GM12878 (cell line): ENCODE measurements at regions of chr10 and their contacts with region 1.

Region 1: DNA sequence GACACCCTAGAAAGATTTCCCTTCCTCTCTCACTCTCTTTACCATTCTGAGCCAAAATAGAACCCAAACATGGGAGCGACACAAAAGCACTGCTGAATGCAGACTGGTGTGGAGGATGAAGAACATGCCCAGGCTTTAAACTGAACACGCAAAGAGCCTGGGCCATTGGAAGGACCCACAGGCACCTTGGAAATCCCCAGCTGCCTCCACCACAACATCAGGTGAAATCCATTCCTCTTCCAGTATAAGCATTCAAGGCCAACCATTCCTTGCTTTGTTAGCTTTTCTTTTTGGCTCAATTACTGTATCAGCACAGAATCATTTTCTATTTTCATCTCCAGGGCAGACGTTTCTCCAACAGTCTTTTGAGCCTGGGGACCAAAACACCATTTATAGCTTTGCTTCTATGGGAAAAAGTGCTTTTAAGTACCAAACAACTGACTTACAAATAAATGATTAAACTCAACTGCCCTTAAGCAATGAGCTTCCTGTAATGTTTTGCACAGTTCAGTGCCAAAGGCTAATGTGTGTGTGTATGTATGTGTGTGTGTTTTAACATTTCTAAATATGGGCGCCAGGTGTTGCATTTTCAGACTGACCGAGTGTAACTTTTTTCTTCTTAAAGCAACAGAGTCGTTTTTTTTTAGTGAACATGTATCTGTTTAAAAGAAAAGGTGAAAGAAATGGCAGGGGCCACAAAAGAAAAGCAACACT is 16.2 kb upstream of the BLNK start:
- DNase-seq: peak; percentile 93
- ATAC-seq: peak; percentile 81
- H3K4me3 ChIP-seq: peak overlapping the region; percentile 70
- H3K27ac ChIP-seq: peak overlapping the region; percentile 92
- H3K4me1 ChIP-seq: peaks cover 50% of the 10 kb centered on the region
- H3K27me3 ChIP-seq: no peaks in the 10 kb centered on the region
- CTCF ChIP-seq: no peak
- EP300 ChIP-seq: peak; percentile 78 to 96; a peak in 3 of 4 replicates
- POLR2A ChIP-seq: no peak; the same call in 1 of the 2 replicates
- RAD21 ChIP-seq: 0 out of 2 replicates have a peak, but pooled peaks have one; percentile 29

Region 2: DNA sequence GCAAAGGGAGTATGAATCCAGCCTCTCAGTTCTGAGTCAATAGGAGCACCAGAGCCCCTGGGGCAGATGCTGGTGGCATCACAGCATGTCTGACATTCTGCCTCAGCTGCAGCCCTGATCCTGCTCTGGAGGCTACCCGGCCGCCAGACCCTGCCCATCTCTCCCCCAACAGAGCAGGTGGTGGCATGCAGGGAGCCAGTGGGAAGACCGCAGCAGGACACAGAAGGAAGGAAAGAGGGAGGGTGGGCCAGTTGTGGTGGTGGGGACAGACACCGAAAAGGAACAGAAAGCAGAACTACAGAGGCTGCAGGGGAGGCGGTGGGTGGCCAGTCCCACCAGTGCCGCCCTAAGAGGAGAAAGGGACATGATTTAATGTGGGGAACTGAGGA is 51.5 kb before region 1 on chr10:
- CTCF ChIA-PET with region 1: interaction called, 790 read pairs
- POLR2A ChIA-PET with region 1: interaction called, 60 read pairs
- RAD21 ChIA-PET with region 1: interaction called, 428 read pairs
- SMC1A ChIA-PET with region 1: interaction called, 424 read pairs
- in situ Hi-C with region 1: no loop called
- intact Hi-C with region 1: no loop called
- DNase-seq: no peak
- ATAC-seq: peak; percentile 66
- H3K4me3 ChIP-seq: no peak overlapping the region; the same call in 1 of the 2 replicates
- H3K27ac ChIP-seq: peak overlapping the region; percentile 45; the same call in 1 of the 2 replicates
- H3K4me1 ChIP-seq: peaks cover 37% of the 10 kb centered on the region
- H3K27me3 ChIP-seq: no peaks in the 10 kb centered on the region
- CTCF ChIP-seq: no peak
- EP300 ChIP-seq: no peak
- POLR2A ChIP-seq: no peak
- RAD21 ChIP-seq: no peak

Region 3: GRCh38 chr10:96244354-96244753 is 43.2 kb before region 1 on chr10:
- CTCF ChIA-PET with region 1: interaction called, 790 read pairs
- POLR2A ChIA-PET with region 1: interaction called, 22 read pairs
- RAD21 ChIA-PET with region 1: interaction called, 428 read pairs
- SMC1A ChIA-PET with region 1: interaction called, 60 read pairs
- in situ Hi-C with region 1: no loop called
- intact Hi-C with region 1: loop called (anchors 1 kb)
- DNase-seq: peak; percentile 89
- ATAC-seq: peak; percentile 98
- H3K4me3 ChIP-seq: 0 out of 2 replicates have a peak overlapping the region, but pooled peaks have one; percentile 18
- H3K27ac ChIP-seq: peak overlapping the region; percentile 67
- H3K4me1 ChIP-seq: peaks cover 24% of the 10 kb centered on the region
- H3K27me3 ChIP-seq: no peaks in the 10 kb centered on the region
- CTCF ChIP-seq: no peak
- EP300 ChIP-seq: peak; percentile 41 to 56; a peak in 3 of 4 replicates
- POLR2A ChIP-seq: peak; percentile 46
- RAD21 ChIP-seq: peak; percentile 3; the same call in 1 of the 2 replicates

Region 4: DNA sequence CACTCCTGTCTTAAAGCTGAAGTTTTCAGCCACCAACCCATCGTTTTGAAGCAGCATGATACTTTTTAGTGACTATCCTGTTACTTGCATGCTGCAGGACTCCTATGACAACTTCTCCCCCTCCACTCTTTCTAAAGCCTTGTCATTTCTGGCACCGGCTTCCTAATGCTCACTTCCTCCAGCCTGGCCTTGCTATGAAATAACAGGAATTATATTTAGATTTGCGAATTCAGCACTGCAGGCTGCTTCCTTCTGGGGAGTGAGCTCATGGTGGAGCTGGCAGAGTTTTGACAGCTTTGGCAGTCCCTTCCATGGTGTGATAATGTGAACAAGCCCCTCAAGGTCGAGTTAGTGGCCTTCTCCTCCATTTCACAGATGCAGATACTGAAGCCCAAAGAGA is 29.6 kb before region 1 on chr10:
- CTCF ChIA-PET with region 1: interaction called, 26 read pairs
- POLR2A ChIA-PET with region 1: interaction called, 12 read pairs
- RAD21 ChIA-PET with region 1: interaction called, 362 read pairs
- SMC1A ChIA-PET with region 1: interaction called, 140 read pairs
- in situ Hi-C with region 1: no loop called
- intact Hi-C with region 1: no loop called
- DNase-seq: no peak
- ATAC-seq: peak; percentile 19; the same call in 2 of the 3 replicates
- H3K4me3 ChIP-seq: peak overlapping the region; percentile 1; the same call in 1 of the 2 replicates
- H3K27ac ChIP-seq: peak overlapping the region; percentile 38
- H3K4me1 ChIP-seq: peaks cover 34% of the 10 kb centered on the region
- H3K27me3 ChIP-seq: no peaks in the 10 kb centered on the region
- CTCF ChIP-seq: no peak
- EP300 ChIP-seq: no peak
- POLR2A ChIP-seq: no peak
- RAD21 ChIP-seq: no peak

Region 5: GRCh38 chr10:96357038-96357620 is 69.6 kb after region 1 on chr10:
- CTCF ChIA-PET with region 1: no interaction called
- POLR2A ChIA-PET with region 1: no interaction called
- RAD21 ChIA-PET with region 1: no interaction called
- SMC1A ChIA-PET with region 1: no interaction called
- in situ Hi-C with region 1: no loop called
- intact Hi-C with region 1: no loop called
- DNase-seq: no peak
- ATAC-seq: no peak
- H3K4me3 ChIP-seq: no peak overlapping the region
- H3K27ac ChIP-seq: no peak overlapping the region
- H3K4me1 ChIP-seq: no peaks in the 10 kb centered on the region
- H3K27me3 ChIP-seq: peaks cover 2 to 5% of the 10 kb centered on the region in 2 experiments; a peak in 3 of 4 replicates
- CTCF ChIP-seq: no peak
- EP300 ChIP-seq: no peak
- POLR2A ChIP-seq: no peak
- RAD21 ChIP-seq: no peak

Region 6: DNA sequence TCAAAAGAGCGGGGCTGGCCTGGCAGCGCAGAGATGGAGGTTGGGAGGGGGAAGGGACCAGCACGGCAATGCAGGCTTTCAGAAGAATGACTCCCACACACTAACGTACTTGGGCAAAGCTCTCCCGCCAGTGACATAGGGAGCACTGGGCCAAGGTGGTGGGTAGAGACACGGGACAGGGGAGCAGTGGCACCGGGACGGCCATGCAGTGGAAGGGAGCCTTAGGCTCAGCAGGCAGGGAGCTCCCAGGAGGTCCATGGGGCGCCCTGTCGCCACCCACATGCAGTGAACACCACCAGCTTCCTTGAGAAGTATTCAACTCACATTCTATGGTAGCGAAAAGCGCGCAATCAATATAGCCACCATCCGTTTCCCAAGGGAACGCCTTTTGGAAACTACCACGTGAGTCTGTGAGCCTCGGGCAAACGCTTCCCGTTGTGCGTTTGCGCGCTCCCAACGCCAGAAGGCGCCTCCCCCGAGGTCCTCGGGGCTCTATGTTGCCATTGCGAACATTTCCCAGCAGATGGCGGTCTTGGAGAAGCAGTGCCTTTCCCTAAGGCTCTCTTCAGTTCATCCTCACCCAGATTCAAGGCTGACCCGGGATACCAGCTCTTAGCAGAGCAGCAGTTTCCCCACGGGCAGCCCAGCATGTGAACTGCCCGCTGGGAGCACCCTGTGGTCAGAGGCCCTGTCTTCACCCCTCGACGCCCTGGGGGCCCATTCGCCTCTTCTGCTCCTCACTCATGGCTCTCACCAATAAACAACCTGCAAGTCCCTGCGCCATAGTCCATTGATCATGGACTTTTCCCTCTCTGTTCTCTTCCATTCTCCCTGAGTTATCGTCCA is 87.7 kb after region 1 on chr10:
- CTCF ChIA-PET with region 1: no interaction called
- POLR2A ChIA-PET with region 1: no interaction called
- RAD21 ChIA-PET with region 1: no interaction called
- SMC1A ChIA-PET with region 1: no interaction called
- in situ Hi-C with region 1: no loop called
- intact Hi-C with region 1: no loop called
- DNase-seq: peak; percentile 45
- ATAC-seq: peak; percentile 91
- H3K4me3 ChIP-seq: peak overlapping the region; percentile 68; the same call in 1 of the 2 replicates
- H3K27ac ChIP-seq: no peak overlapping the region
- H3K4me1 ChIP-seq: peaks cover 8% of the 10 kb centered on the region
- H3K27me3 ChIP-seq: no peaks in the 10 kb centered on the region; a peak in 1 of 4 replicates
- CTCF ChIP-seq: peak; percentile 98 to 100 (median 99)
- EP300 ChIP-seq: no peak
- POLR2A ChIP-seq: no peak
- RAD21 ChIP-seq: peak; percentile 87

Region 7: DNA sequence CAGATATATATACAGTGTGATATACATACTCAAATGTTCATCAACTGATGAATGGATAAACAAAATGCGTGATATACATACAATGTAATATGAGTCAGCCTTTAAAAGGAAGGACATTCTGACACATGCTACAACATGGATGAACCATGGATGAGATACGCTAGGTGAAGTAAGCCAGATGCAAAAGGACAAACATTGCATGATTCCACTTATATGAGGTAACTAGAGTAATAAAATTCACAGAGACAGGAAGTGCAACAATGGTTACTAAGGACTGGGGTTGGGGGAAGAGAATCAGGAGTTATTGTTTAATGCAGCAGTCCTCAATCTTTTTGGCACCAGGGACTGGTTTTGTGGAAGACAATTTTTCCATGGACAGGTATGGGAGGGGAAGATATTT is 480.1 kb after region 1 on chr10:
- CTCF ChIA-PET with region 1: no interaction called
- POLR2A ChIA-PET with region 1: no interaction called
- RAD21 ChIA-PET with region 1: no interaction called
- SMC1A ChIA-PET with region 1: no interaction called
- in situ Hi-C with region 1: no loop called
- intact Hi-C with region 1: no loop called
- DNase-seq: no peak
- ATAC-seq: no peak
- H3K4me3 ChIP-seq: no peak overlapping the region
- H3K27ac ChIP-seq: no peak overlapping the region
- H3K4me1 ChIP-seq: peaks cover 15% of the 10 kb centered on the region
- H3K27me3 ChIP-seq: no peaks in the 10 kb centered on the region
- CTCF ChIP-seq: no peak
- EP300 ChIP-seq: no peak
- POLR2A ChIP-seq: no peak
- RAD21 ChIP-seq: no peak